ENCODE measurements at regions of chr10 and their contacts with region 1.

Region 1: DNA sequence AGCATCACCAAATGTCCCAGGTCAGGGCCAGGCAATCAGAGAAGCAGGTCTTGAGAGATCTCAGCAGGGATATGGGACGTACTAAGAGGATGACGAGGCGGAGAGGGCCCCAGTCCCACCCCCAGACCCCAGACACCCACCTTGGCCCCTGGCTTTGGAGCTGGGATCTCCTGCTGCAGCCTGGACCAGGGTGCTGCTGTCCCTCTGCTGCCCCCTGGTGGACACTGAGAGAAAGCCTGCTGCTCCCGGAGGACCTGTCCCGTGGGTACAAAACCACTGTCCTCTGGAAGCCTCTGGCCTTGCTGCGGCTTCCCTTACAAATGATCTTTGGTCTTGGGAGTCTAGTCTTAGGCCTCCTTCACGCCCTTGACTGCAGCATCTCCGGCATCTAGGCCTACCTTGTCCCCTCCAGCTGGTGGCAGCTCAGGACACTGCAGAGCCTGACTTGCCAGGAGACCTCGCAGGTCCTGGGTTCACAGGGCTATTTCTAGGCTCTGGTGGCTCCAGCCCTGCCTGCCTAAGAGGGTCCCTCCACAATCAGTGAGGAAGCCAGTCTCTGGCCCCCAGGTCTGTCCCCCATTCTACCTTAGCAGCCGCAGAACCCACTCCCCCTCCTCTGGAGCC is 97.1 kb downstream of the RGS10 start:
- DNase-seq: peak; percentile 64 to 89 (median 76)
- ATAC-seq: peak; percentile 85
- H3K4me3 ChIP-seq: no peak overlapping the region
- H3K4me3 Mint-ChIP-seq: peak overlapping the region in 1 of 10 donors; percentile 60
- H3K27ac ChIP-seq: no peak overlapping the region
- H3K27ac Mint-ChIP-seq: peak overlapping the region in 8 of 9 donors; percentile 6 to 81 (median 52)
- H3K4me1 ChIP-seq: no peaks in the 10 kb centered on the region
- H3K4me1 Mint-ChIP-seq: peaks cover 12 to 23% (median 17%) of the 10 kb centered on the region in 7 donors
- H3K27me3 ChIP-seq: no peaks in the 10 kb centered on the region
- H3K27me3 Mint-ChIP-seq: no peaks in the 10 kb centered on the region

Region 2: GRCh38 chr10:118531105-118531852 is 914.1 kb before region 1 on chr10:
- CTCF ChIA-PET with region 1: no interaction called
- POLR2A ChIA-PET with region 1: no interaction called
- intact Hi-C with region 1: no loop called
- DNase-seq: no peak
- ATAC-seq: peak; percentile 61
- H3K4me3 ChIP-seq: no peak overlapping the region
- H3K4me3 Mint-ChIP-seq: peak overlapping the region in 1 of 10 donors; percentile 31
- H3K27ac ChIP-seq: no peak overlapping the region
- H3K27ac Mint-ChIP-seq: no peak overlapping the region
- H3K4me1 ChIP-seq: no peaks in the 10 kb centered on the region
- H3K4me1 Mint-ChIP-seq: peaks cover 0 to 21% (median 0%) of the 10 kb centered on the region in 7 donors
- H3K27me3 ChIP-seq: peaks cover 0 to 3% of the 10 kb centered on the region in 2 donors
- H3K27me3 Mint-ChIP-seq: peaks cover 7 to 23% (median 20%) of the 10 kb centered on the region in 5 donors

Region 3: DNA sequence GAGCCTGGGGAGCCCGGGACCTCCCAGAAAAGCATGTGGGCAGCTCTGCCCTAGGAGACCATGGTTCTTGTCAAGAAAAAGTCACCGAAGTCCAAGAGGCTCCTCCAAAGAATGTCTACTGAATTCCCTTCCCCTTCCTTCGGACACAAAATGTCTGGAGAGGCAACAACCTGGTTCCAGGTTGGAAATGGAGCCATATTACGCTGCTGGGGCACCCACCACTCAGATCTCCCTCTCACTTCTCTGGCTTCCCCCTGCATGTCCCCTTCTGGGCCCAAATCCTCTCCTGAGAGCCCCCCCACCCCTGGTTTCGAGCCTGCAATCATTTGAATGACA is 44.5 kb after region 1 on chr10:
- CTCF ChIA-PET with region 1: interaction called, 5 read pairs
- POLR2A ChIA-PET with region 1: interaction called, 3 read pairs
- intact Hi-C with region 1: loop called (anchors 1 kb)
- DNase-seq: no peak
- ATAC-seq: no peak
- H3K4me3 ChIP-seq: peak overlapping the region; percentile 55
- H3K4me3 Mint-ChIP-seq: peak overlapping the region; percentile 53 to 92 (median 84)
- H3K27ac ChIP-seq: peak overlapping the region; percentile 83
- H3K27ac Mint-ChIP-seq: peak overlapping the region; percentile 80 to 98 (median 92)
- H3K4me1 ChIP-seq: peaks cover 24 to 36% of the 10 kb centered on the region in 2 donors
- H3K4me1 Mint-ChIP-seq: peaks cover 19 to 66% (median 59%) of the 10 kb centered on the region in 7 donors
- H3K27me3 ChIP-seq: no peaks in the 10 kb centered on the region
- H3K27me3 Mint-ChIP-seq: no peaks in the 10 kb centered on the region

Region 4: DNA sequence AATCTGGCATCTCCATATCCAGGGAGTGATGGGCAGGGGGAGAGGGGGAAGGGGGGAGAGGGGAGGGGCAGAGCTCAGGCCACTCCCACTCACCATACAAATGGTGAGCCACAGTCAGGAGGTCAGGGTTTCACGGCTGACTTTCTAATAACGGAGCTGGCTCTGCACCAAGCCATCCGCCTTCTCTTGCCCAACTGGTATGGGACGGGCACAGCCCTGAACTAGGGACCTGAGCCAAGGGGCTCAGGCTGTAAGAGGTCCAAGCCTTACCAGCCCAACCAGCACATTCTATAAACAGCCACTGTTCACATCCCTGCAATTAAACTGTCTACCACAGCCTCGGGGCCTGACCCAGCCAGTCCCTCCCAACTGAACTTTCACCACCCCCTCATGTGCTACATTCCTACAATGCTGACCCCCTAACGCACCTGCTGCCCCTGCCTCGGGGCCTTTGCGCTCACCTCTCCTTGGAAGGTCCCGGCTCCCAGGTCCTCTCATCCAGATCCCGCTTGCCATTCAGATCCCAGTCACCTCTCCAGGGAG is 64.6 kb after region 1 on chr10:
- CTCF ChIA-PET with region 1: no interaction called
- POLR2A ChIA-PET with region 1: no interaction called
- intact Hi-C with region 1: no loop called
- DNase-seq: no peak
- ATAC-seq: no peak
- H3K4me3 ChIP-seq: no peak overlapping the region
- H3K4me3 Mint-ChIP-seq: peak overlapping the region in 8 of 10 donors; percentile 18 to 69 (median 52)
- H3K27ac ChIP-seq: peak overlapping the region; percentile 51
- H3K27ac Mint-ChIP-seq: peak overlapping the region; percentile 0 to 95 (median 86)
- H3K4me1 ChIP-seq: peaks cover 0 to 66% of the 10 kb centered on the region in 2 donors
- H3K4me1 Mint-ChIP-seq: peaks cover 32 to 80% (median 68%) of the 10 kb centered on the region in 7 donors
- H3K27me3 ChIP-seq: no peaks in the 10 kb centered on the region
- H3K27me3 Mint-ChIP-seq: no peaks in the 10 kb centered on the region